Breast epithelium (tissue), 4 donors: ENCODE measurements at regions of chr3 and their contacts with region 1.

Region 1: DNA sequence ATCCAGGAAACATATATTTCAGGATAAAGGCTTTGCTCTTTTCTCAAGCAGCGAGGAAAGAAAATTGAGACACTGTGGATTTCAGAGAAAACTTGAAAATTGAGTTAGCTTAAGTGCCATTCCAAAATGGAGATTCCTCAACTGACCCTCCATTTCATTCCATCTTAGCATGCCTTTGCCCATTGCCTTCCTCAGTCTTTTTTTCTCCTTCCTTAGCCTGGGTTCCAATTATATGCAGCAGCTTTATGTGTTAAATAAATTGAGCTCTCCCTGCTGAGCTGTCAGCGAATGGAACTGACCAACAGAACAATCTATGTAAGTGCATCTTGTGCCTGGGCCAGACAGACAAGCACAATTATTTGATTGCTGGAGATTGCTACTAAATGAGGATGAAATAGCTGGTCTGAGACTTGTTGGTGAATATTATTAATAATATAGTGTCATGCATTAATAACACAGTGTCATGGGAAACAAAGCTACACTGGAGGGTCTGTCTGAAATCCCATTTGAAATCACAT is 6.9 kb upstream of the DNAJC19 start:
- DNase-seq: no peak
- H3K4me3 ChIP-seq: no peak overlapping the region
- H3K27ac ChIP-seq: no peak overlapping the region
- H3K4me1 ChIP-seq: no peaks in the 10 kb centered on the region
- H3K27me3 ChIP-seq: no peaks in the 10 kb centered on the region
- CTCF ChIP-seq: no peak
- POLR2A ChIP-seq: no peak

Region 2: GRCh38 chr3:180881065-180881801 is 115.2 kb before region 1 on chr3:
- intact Hi-C with region 1: no loop called
- DNase-seq: no peak
- H3K4me3 ChIP-seq: no peak overlapping the region
- H3K27ac ChIP-seq: no peak overlapping the region
- H3K4me1 ChIP-seq: no peaks in the 10 kb centered on the region
- H3K27me3 ChIP-seq: no peaks in the 10 kb centered on the region
- CTCF ChIP-seq: no peak
- POLR2A ChIP-seq: no peak

Region 3: DNA sequence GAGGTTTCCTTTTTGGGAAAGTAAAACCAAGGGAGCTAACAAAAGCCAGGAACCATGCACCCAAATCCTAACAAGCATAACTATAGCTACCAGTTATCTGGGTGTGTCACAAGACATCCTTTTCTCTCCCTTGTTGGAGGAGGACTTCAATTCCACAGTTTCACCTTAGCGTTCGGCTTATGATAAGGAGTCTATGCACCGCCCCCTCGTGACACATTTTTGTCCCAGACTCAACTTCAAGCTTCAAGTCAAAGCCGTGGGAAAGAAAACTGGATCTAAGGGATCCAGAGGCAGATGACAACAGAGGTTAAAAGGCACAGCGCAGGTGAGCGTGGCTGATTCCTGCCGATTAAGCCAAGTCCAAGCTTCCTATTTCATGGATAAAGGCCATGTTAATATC is 97.9 kb before region 1 on chr3:
- intact Hi-C with region 1: no loop called
- DNase-seq: no peak
- H3K4me3 ChIP-seq: no peak overlapping the region
- H3K27ac ChIP-seq: no peak overlapping the region
- H3K4me1 ChIP-seq: no peaks in the 10 kb centered on the region
- H3K27me3 ChIP-seq: no peaks in the 10 kb centered on the region
- CTCF ChIP-seq: no peak
- POLR2A ChIP-seq: no peak

Region 4: GRCh38 chr3:181050738-181051137 is 54.3 kb after region 1 on chr3:
- intact Hi-C with region 1: loop called (anchors 2 kb)
- DNase-seq: no peak
- H3K4me3 ChIP-seq: no peak overlapping the region
- H3K27ac ChIP-seq: no peak overlapping the region
- H3K4me1 ChIP-seq: no peaks in the 10 kb centered on the region
- H3K27me3 ChIP-seq: no peaks in the 10 kb centered on the region
- CTCF ChIP-seq: no peak
- POLR2A ChIP-seq: no peak

Region 5: GRCh38 chr3:181298421-181298820 is 301.9 kb after region 1 on chr3:
- intact Hi-C with region 1: no loop called
- DNase-seq: no peak
- H3K4me3 ChIP-seq: no peak overlapping the region
- H3K27ac ChIP-seq: no peak overlapping the region
- H3K4me1 ChIP-seq: no peaks in the 10 kb centered on the region
- H3K27me3 ChIP-seq: no peaks in the 10 kb centered on the region
- CTCF ChIP-seq: no peak
- POLR2A ChIP-seq: no peak

Region 6: DNA sequence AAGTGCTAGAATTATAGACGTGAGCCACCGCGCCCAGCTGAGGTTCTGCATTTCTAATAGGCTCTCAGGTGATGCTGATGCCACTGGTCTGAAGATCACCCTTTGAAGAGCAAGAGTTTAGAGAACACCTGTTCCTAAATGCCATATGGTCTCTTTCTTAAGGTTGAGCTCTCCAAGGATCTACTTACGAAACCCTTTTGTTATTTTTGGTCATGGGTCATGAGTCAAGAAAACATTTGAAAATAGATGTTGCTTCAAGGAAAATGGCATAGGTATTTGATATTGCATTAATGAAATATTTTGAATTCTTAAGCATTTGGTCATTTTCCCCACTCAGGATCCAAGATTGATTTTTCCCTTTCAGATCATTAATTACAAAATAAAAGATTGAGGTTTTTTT is 640.6 kb after region 1 on chr3:
- intact Hi-C with region 1: no loop called
- DNase-seq: no peak
- H3K4me3 ChIP-seq: no peak overlapping the region
- H3K27ac ChIP-seq: no peak overlapping the region
- H3K4me1 ChIP-seq: no peaks in the 10 kb centered on the region
- H3K27me3 ChIP-seq: no peaks in the 10 kb centered on the region
- CTCF ChIP-seq: no peak
- POLR2A ChIP-seq: no peak